Dendritic cell treated with granulocyte-macrophage colony-stimulating factor and Interleukin-4, amounts not matched to agents 40 ng/mL and 50 ng/mL, for 4 days (primary cell): ENCODE measurements at regions of chr1 and their contacts with region 1.

Region 1: GRCh38 chr1:6646499-6647148 is 22.0 kb downstream of the THAP3 start:
- H3K4me3 Mint-ChIP-seq: no peak overlapping the region
- H3K27ac Mint-ChIP-seq: no peak overlapping the region
- H3K4me1 Mint-ChIP-seq: no peaks in the 10 kb centered on the region
- H3K27me3 Mint-ChIP-seq: no peaks in the 10 kb centered on the region

Region 2: GRCh38 chr1:6127587-6128163 is 518.9 kb before region 1 on chr1:
- intact Hi-C with region 1: no loop called
- H3K4me3 Mint-ChIP-seq: peak overlapping the region; percentile 28
- H3K27ac Mint-ChIP-seq: peak overlapping the region; percentile 33
- H3K4me1 Mint-ChIP-seq: peaks cover 20% of the 10 kb centered on the region
- H3K27me3 Mint-ChIP-seq: peaks cover 23% of the 10 kb centered on the region

Region 3: GRCh38 chr1:6477039-6477820 is 169.4 kb before region 1 on chr1:
- intact Hi-C with region 1: no loop called
- H3K4me3 Mint-ChIP-seq: no peak overlapping the region
- H3K27ac Mint-ChIP-seq: no peak overlapping the region
- H3K4me1 Mint-ChIP-seq: peaks cover 9% of the 10 kb centered on the region
- H3K27me3 Mint-ChIP-seq: peaks cover 19% of the 10 kb centered on the region

Region 4: DNA sequence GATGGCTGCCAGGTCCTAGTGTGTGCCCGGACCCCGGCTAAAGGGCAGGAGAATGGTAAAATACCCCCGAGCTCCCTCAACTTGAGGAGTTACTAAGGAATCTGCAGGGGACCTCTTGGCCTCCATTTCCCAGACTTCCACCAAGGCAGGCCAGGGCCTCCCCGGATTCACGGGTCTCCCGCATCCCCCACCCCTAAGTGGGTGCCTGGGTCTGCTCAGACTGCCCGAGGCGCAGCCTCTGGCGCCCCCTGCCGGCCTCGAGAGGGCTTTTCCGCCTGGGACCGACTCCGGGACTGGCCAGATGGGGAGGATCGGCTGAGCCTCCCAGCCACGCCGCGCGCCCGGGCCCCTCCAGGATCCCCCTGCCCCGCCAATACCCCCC is 156.8 kb before region 1 on chr1:
- intact Hi-C with region 1: loop called (anchors 1 kb)
- H3K4me3 Mint-ChIP-seq: peak overlapping the region; percentile 54
- H3K27ac Mint-ChIP-seq: no peak overlapping the region
- H3K4me1 Mint-ChIP-seq: peaks cover 32% of the 10 kb centered on the region
- H3K27me3 Mint-ChIP-seq: peaks cover 81% of the 10 kb centered on the region

Region 5: DNA sequence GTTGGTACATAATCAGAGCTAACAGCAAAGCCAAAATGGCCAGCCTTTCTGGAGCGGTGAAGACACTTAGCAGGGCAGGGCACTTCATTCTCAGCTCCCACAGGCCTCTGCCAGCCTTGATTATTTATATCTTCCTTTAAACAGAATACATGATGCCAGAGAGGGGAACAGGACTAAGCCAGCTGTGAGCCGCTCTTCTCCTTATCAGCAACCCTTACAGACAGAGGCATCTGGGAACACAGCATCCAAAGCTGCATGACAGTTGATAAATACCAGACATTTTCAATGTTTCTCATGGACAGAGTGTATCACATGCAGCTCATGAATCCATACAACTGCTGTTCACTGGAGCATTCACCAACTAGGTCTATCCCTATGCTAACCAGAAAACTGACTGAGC is 25.9 kb after region 1 on chr1:
- intact Hi-C with region 1: no loop called
- H3K4me3 Mint-ChIP-seq: no peak overlapping the region
- H3K27ac Mint-ChIP-seq: no peak overlapping the region
- H3K4me1 Mint-ChIP-seq: no peaks in the 10 kb centered on the region
- H3K27me3 Mint-ChIP-seq: no peaks in the 10 kb centered on the region